WTC11 (cell line): ENCODE measurements at regions of chr2 and their contacts with region 1.

Region 1: DNA sequence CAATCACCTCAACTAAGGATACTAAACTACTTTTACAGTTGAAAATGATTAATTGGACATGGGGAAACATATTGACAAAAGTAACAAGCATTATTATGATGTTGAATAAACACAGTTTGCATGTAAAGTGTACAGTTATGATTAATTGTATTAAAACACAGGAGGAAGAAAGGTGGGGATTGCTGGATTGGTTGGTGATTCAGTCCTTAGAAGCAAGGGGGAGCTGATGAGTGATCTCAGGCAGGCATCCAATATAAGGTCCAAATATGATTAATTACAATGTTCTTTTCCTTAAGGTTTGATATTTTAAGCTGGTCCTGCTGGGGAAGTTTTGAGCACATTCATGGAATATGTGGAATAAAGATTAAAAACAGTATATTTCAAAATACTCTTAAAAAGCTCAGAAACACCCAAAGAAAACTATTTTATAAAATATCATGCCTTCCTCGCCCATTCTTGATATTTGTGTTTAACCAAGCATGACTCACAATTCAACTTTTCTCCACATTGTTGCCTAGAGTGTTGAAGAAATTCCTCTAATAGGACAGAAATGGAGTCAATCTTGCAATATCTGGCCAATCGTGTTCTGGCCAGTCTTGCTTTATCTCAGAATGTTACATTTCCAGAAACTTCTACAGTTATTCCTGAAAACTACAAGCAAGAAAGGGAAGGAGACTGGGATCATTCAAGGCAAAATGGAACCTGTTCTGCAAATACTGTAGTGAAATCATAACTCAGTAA is 268.2 kb downstream of the RPIA start:
- DNase-seq: no peak
- ATAC-seq: no peak
- H3K4me3 Mint-ChIP-seq: no peak overlapping the region
- H3K27ac Mint-ChIP-seq: no peak overlapping the region
- H3K4me1 Mint-ChIP-seq: no peaks in the 10 kb centered on the region
- H3K27me3 Mint-ChIP-seq: no peaks in the 10 kb centered on the region; the same call in 1 of the 2 replicates
- CTCF ChIP-seq: no peak; the same call in 1 of the 2 replicates

Region 2: GRCh38 chr2:88903749-88904353 is 55.8 kb before region 1 on chr2:
- CTCF ChIA-PET with region 1: interaction called, 12 read pairs
- POLR2A ChIA-PET with region 1: no interaction called
- DNase-seq: no peak
- ATAC-seq: peak; percentile 79
- H3K4me3 Mint-ChIP-seq: no peak overlapping the region
- H3K27ac Mint-ChIP-seq: no peak overlapping the region
- H3K4me1 Mint-ChIP-seq: no peaks in the 10 kb centered on the region
- H3K27me3 Mint-ChIP-seq: no peaks in the 10 kb centered on the region
- CTCF ChIP-seq: peak; percentile 56